ENCODE measurements at regions of chr18 and their contacts with region 1.

Region 1: DNA sequence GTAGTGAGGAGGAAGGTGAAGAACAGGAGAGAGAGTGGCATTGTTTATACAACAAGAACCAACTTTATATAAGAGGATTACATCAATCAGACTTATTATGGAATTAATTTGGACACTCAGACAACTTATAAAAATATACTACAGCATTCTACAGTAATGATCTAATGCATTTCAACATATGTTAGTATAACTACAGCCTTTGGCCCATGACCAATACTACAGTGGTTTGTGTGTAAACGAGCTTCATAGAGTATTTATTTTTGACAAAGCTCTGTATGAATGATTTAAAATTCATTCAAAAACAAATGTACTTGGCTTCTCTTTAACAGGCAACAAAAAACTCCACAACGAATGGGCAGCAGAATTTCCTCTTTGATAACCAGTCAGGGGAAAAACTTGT is 72.8 kb downstream of the ZNF521 start:
- DNase-seq: no peak
- ATAC-seq: no peak

Region 2: GRCh38 chr18:25239581-25240419 is 39.3 kb before region 1 on chr18:
- intact Hi-C with region 1: loop called in 1 of 2 experiments (anchors 5 kb)
- DNase-seq: no peak
- ATAC-seq: peak; percentile 17 to 23

Measured in left cardiac atrium (tissue), 4 donors.